ENCODE measurements at regions of chr1 and their contacts with region 1.

Region 1: DNA sequence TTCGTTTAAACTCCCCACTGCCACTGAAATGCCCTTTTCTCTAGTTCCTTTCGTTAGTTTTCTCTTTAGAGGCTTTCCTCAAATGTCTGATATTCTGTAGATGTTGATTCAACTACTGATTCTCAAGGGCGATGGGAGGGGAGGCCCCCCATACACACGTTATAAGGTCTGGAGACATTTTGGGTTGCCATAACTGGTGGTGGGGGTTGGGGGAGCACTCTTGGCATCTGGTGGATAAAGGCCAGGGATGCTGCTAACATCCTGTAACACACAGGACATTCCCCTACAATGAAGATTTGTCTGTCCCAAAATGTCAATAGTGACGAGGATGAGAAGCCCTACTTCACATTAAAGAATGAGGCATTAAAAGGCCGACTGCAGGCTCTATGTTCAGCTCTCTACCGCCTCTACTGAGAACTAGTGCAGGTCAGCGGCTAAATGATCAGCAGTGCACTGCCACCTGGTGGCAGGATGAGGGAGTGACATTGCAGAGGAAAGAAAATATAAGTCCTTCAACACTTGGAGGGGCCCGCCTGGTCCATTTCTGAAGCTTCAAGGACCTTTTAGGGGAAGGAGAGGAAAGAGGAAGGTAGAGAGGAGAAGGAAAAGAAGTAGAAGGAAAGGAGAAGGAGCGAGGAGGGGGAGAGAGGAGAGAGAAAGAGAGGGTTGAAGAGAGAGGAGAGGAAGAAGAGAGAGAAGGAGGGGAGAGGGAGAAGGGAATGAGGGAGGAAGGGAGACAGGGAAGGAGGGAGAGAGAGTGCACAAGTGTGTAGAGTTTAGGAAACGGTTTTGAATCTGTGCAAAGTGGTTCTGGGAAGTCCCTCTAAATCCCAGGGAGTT is 29.4 kb downstream of the ALG14 start:
- DNase-seq: peak; percentile 93

Region 2: DNA sequence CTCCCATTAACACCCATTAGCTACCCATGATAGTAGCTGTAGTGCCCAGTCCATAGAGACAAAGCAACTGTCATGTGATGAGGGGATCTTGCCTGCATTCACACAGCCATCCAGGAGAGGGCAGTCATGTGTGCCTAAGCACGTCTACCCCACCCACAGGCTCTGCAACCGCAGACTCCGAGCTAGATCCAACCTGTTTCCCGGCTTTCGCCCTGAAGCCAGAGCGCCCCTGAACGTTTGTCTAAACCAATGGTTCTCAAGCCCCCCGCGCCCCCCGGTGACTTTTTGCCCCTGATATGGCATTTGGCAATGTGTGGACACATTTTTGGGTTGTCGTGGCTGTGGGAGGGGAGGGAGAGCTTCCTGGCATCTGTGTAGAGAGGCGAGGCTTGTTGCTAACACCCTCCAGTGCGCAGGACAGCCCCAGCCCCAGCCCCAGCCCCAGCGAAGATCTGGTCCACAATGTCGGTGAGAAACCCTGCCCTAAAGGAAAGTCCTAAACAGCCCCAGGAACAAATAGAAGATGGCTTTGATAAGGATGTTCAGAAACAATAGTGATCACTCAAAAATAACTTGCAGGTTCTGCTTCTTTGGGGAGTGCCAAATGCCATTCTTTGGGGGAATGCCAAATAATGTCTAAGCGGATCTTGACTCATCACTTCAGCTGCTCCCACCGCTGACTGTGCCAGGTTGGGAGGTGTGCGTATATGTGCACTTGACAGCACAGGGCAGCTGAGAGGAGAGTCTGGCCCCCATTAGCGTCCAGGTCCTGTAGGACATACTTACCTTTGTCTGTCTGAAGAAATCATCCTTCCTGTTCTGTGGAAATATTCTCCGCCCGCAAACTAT is 188.7 kb before region 1 on chr1:
- intact Hi-C with region 1: loop called (anchors 2 to 5 kb)
- DNase-seq: peak; percentile 95

Region 3: DNA sequence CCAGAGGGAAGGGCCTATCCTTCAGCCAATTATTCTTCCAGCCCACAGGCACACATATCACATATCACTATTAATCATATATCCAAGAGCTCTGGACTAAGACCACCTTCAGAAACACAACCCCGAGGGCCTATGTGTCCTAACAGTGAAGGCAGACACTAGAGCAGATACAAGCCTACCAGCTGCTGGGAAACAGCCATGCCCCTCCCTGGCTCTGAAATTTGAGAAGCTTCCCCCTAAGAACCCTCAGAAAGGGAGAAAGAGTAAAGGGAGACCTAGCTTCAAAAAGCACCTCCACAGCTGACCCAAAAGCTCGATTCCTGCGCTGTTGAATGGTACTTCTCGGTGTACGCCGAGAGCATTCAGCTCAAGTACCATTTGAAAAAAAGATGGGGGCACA is 133.9 kb before region 1 on chr1:
- intact Hi-C with region 1: loop called in 1 of 2 experiments (anchors 5 kb)
- DNase-seq: no peak

Region 4: GRCh38 chr1:95278173-95279006 is 235.0 kb after region 1 on chr1:
- intact Hi-C with region 1: no loop called
- DNase-seq: no peak

Region 5: GRCh38 chr1:95364546-95364945 is 321.2 kb after region 1 on chr1:
- intact Hi-C with region 1: no loop called
- DNase-seq: no peak

Measured in posterior vena cava (tissue), 2 donors.